Kidney (tissue), 22 donors: ENCODE measurements at regions of chr12 and their contacts with region 1.

Region 1: GRCh38 chr12:7219599-7220243 is 30.2 kb downstream of the PEX5 start:
- DNase-seq: peak in 4 of 5 donors; percentile 70 to 87 (median 79)
- H3K4me3 ChIP-seq: no peak overlapping the region
- H3K27ac ChIP-seq: no peak overlapping the region
- H3K4me1 ChIP-seq: no peaks in the 10 kb centered on the region
- H3K27me3 ChIP-seq: no peaks in the 10 kb centered on the region
- CTCF ChIP-seq: peak; percentile 85

Region 2: GRCh38 chr12:7122811-7123769 is 96.6 kb before region 1 on chr12:
- intact Hi-C with region 1: no loop called
- DNase-seq: peak in 1 of 5 donors; percentile 24
- H3K4me3 ChIP-seq: peak overlapping the region in 2 of 3 donors; percentile 16 to 59
- H3K27ac ChIP-seq: peak overlapping the region; percentile 64 to 77
- H3K4me1 ChIP-seq: peaks cover 0 to 29% (median 22%) of the 10 kb centered on the region in 3 donors
- H3K27me3 ChIP-seq: no peaks in the 10 kb centered on the region
- CTCF ChIP-seq: no peak

Region 3: GRCh38 chr12:7327918-7328317 is 108.2 kb after region 1 on chr12:
- intact Hi-C with region 1: no loop called
- DNase-seq: no peak
- H3K4me3 ChIP-seq: no peak overlapping the region
- H3K27ac ChIP-seq: no peak overlapping the region
- H3K4me1 ChIP-seq: no peaks in the 10 kb centered on the region
- H3K27me3 ChIP-seq: no peaks in the 10 kb centered on the region
- CTCF ChIP-seq: no peak

Region 4: GRCh38 chr12:7638760-7639555 is 419.2 kb after region 1 on chr12:
- intact Hi-C with region 1: loop called (anchors 5 kb)
- DNase-seq: peak; percentile 84 to 95 (median 89)
- H3K4me3 ChIP-seq: peak overlapping the region; percentile 14 to 36 (median 20)
- H3K27ac ChIP-seq: no peak overlapping the region
- H3K4me1 ChIP-seq: peaks cover 0 to 2% (median 0%) of the 10 kb centered on the region in 3 donors
- H3K27me3 ChIP-seq: no peaks in the 10 kb centered on the region
- CTCF ChIP-seq: peak; percentile 97